ENCODE measurements at regions of chr9 and their contacts with region 1.

Region 1: DNA sequence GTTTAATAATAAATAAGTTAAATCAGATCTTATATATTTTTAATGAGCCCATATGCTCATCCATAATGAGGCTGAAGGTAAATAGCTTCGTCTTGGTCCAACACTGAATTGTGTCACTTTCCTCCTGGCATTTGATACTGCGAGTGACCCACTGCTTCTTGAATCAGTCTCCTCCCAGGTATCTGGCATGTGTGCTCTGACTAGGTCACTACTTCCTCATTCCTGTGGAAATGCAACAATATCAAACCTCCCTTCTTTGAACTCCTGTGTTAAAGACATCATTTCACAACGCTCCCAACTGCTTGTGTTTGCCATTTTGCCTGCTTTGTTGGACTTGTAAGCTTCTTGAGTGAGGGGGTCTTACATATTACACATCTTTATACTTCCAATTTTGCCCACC is 157.7 kb downstream of the SLC24A2 start:
- DNase-seq: no peak

Region 2: DNA sequence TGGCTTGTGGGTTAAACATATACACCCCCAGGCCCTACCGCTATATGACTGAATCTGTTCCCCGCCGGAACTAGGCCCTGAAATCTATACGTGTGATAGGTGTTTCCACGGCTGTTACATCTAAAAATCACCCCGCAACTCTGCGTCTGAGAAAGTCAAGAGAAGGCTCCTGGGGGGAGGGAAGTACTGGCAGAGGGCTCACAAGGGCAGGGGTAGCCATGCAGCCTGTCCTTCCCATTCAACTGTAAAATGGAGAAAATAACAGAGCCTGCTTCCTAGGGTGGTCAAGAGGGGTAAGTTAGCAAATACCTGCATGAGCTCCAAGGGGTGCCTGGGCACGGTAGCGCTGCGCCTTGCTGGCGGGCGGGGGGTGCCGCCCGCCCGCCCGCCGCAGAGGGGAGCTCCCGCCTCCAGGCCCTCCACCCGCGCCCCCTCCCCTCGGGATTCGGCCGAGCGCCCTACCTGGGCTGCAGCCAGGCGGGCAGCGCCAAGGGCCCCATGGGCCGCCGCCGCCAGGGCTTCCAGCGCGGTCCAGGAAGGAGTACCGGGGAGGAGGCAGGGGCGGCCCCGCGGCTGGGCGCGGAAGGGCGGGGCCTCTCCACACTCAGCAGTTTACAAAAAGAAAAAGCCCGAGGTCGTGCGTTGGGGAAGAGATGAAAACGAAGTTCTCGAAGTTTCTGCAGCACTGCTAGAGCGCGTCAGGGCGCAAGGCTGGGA is 1400.1 kb after region 1 on chr9 and contains the start of gene HACD4:
- intact Hi-C with region 1: loop called in 1 of 2 experiments (anchors 10 kb)
- DNase-seq: peak; percentile 87
- total RNA-seq, gene HACD4: 1.6 to 2.1 TPM